Esophagus squamous epithelium (tissue), 5 donors: ENCODE measurements at regions of chr9 and their contacts with region 1.

Region 1: DNA sequence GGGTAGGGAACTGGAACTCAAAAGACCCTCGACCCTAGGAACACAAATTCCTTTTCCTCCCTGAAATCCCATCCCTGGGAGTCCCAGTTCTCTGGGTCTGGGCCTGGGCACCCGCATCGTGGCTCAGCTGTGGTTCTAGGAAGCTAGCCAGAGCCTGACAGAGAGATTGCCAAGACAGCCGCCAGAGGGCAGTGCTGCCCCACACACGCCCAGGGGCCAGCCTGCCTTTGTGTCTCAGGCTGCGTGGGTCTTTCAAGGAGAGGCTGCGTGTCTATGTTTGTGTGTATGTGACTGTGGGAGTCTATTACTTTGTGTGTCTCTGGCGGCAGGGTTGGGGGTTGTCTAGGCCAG is 32.0 kb upstream of the TTLL11 start:
- DNase-seq: no peak
- H3K4me3 ChIP-seq: no peak overlapping the region
- H3K27ac ChIP-seq: no peak overlapping the region
- H3K4me1 ChIP-seq: peaks cover 20 to 35% (median 21%) of the 10 kb centered on the region in 3 donors
- H3K27me3 ChIP-seq: peaks cover 0 to 39% (median 5%) of the 10 kb centered on the region in 4 donors
- CTCF ChIP-seq: peak; percentile 86 to 96 (median 92)
- POLR2A ChIP-seq: no peak

Region 2: GRCh38 chr9:122350638-122351355 is 225.7 kb after region 1 on chr9:
- intact Hi-C with region 1: loop called (anchors 5 kb)
- DNase-seq: no peak
- H3K4me3 ChIP-seq: no peak overlapping the region
- H3K27ac ChIP-seq: no peak overlapping the region
- H3K4me1 ChIP-seq: peaks cover 4 to 23% (median 14%) of the 10 kb centered on the region in 3 donors
- H3K27me3 ChIP-seq: peaks cover 0 to 4% (median 0%) of the 10 kb centered on the region in 4 donors
- CTCF ChIP-seq: peak; percentile 92 to 97 (median 95)
- POLR2A ChIP-seq: no peak

Region 3: DNA sequence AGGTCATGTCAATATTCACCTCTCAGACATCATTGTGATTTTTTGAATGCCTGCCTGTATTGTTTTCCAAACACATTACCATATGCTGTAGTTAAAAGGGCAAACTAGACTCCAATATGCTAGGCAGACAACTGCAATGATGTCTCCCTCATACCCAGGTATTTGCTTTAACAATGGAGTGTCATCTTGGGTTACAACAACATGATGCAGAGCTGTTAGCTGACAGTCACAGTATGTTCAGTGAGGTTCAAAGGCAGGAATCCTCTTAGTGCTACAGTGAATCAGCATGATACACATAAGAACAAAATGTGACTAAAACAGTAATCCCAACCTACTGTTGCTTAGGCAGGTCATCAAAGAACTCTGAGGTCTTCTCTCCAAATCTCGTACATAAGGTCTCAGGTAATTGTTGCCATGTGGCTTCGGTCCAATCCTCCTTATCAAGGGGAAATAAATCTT is 328.6 kb after region 1 on chr9:
- intact Hi-C with region 1: loop called (anchors 10 kb)
- DNase-seq: no peak
- H3K4me3 ChIP-seq: no peak overlapping the region
- H3K27ac ChIP-seq: no peak overlapping the region
- H3K4me1 ChIP-seq: peaks cover 0 to 7% (median 0%) of the 10 kb centered on the region in 3 donors
- H3K27me3 ChIP-seq: no peaks in the 10 kb centered on the region
- CTCF ChIP-seq: no peak
- POLR2A ChIP-seq: no peak

Region 4: GRCh38 chr9:122810306-122810946 is 685.3 kb after region 1 on chr9:
- intact Hi-C with region 1: loop called (anchors 10 kb)
- DNase-seq: no peak
- H3K4me3 ChIP-seq: peak overlapping the region in 1 of 4 donors; percentile 0
- H3K27ac ChIP-seq: no peak overlapping the region
- H3K4me1 ChIP-seq: peaks cover 2 to 34% (median 7%) of the 10 kb centered on the region in 3 donors
- H3K27me3 ChIP-seq: no peaks in the 10 kb centered on the region
- CTCF ChIP-seq: peak; percentile 45 to 87 (median 83)
- POLR2A ChIP-seq: no peak